Prostate gland (tissue), 2 donors: ENCODE measurements at regions of chr15 and their contacts with region 1.

Region 1: GRCh38 chr15:55407949-55408791 is at the starts of genes CCPG1 and PIERCE2:
- DNase-seq: peak; percentile 86
- H3K4me3 ChIP-seq: peak within 1 kb of the TSS; percentile 65 to 85
- H3K27ac ChIP-seq: peak within 1 kb of the TSS; percentile 85 to 90
- H3K4me1 ChIP-seq: no peaks in the 10 kb centered on the region
- H3K27me3 ChIP-seq: no peaks in the 10 kb centered on the region
- CTCF ChIP-seq: peak; percentile 68 to 97 (median 86)
- POLR2A ChIP-seq: peak; percentile 74
- total RNA-seq, gene CCPG1: 23.4 to 78.2 TPM
- total RNA-seq, gene PIERCE2: 4.0 to 4.6 TPM

Region 2: DNA sequence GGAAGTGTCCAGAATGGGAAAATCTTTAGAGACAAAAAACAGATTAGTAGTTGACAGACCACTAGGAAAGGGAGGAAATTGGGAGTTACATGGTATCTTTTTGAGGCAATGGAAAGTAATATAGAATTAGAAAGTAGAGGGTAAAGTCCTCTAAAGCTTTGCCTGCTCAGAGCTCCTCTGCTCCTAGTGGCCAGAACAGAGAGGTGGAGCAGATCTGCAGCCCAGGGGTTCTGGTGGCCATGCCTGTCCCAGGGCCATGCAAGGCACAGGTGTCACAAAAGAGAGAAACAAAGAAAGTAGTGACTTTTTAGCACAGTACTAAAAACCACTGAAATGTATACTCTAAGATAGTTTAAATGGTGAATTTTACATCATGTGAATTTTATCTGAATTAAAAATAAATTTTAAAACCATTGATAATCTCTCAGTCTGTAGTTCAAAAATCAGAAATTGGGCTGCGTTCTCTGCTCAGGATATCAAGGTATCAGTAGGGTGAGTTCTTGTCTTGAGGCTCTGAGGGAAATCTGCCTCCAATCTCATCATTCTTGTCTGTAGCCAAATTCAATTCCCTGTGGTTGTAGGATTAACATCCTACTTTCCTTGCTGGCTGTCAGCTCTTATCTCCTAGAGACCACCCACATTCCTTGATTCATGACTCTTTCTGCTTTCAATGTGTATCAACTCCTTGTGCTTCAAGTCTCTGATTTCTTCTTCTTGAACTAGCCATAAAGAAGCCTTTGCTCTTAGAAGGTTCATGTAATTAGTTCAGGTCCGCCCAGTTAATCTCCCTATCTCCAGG is 156.4 kb after region 1 on chr15:
- intact Hi-C with region 1: no loop called
- DNase-seq: no peak
- H3K4me3 ChIP-seq: no peak overlapping the region
- H3K27ac ChIP-seq: no peak overlapping the region
- H3K4me1 ChIP-seq: no peaks in the 10 kb centered on the region
- H3K27me3 ChIP-seq: no peaks in the 10 kb centered on the region
- CTCF ChIP-seq: no peak
- POLR2A ChIP-seq: no peak

Region 3: GRCh38 chr15:55588070-55588814 is 180.1 kb after region 1 on chr15 and contains the start of gene PYGO1:
- intact Hi-C with region 1: loop called (anchors 10 kb)
- DNase-seq: peak; percentile 54
- H3K4me3 ChIP-seq: peak within 1 kb of the TSS; percentile 68 to 72
- H3K27ac ChIP-seq: peak within 1 kb of the TSS; percentile 88 to 90
- H3K4me1 ChIP-seq: no peaks in the 10 kb centered on the region
- H3K27me3 ChIP-seq: no peaks in the 10 kb centered on the region
- CTCF ChIP-seq: peak in 1 of 4 experiments; percentile 1
- POLR2A ChIP-seq: no peak
- total RNA-seq, gene PYGO1: 7.2 to 12.3 TPM